Naive thymus-derived CD4-positive, alpha-beta T cell (primary cell): ENCODE measurements at regions of chr3 and their contacts with region 1.

Region 1: GRCh38 chr3:41207355-41207754 is 8.1 kb downstream of the CTNNB1 start:
- DNase-seq: no peak
- ATAC-seq: no peak
- H3K4me3 ChIP-seq: no peak overlapping the region
- H3K4me3 Mint-ChIP-seq: peak overlapping the region in 9 of 10 donors; percentile 38 to 90 (median 59)
- H3K27ac ChIP-seq: no peak overlapping the region
- H3K27ac Mint-ChIP-seq: peak overlapping the region in 6 of 9 donors; percentile 19 to 80 (median 45)
- H3K4me1 ChIP-seq: peaks cover 56 to 71% of the 10 kb centered on the region in 2 donors
- H3K4me1 Mint-ChIP-seq: peaks cover 44 to 91% (median 85%) of the 10 kb centered on the region in 7 donors
- H3K27me3 ChIP-seq: no peaks in the 10 kb centered on the region
- H3K27me3 Mint-ChIP-seq: no peaks in the 10 kb centered on the region

Region 2: GRCh38 chr3:41175365-41175764 is 32.0 kb before region 1 on chr3:
- CTCF ChIA-PET with region 1: no interaction called
- POLR2A ChIA-PET with region 1: no interaction called
- intact Hi-C with region 1: no loop called
- DNase-seq: no peak
- ATAC-seq: no peak
- H3K4me3 ChIP-seq: no peak overlapping the region
- H3K4me3 Mint-ChIP-seq: no peak overlapping the region
- H3K27ac ChIP-seq: no peak overlapping the region
- H3K27ac Mint-ChIP-seq: no peak overlapping the region
- H3K4me1 ChIP-seq: no peaks in the 10 kb centered on the region
- H3K4me1 Mint-ChIP-seq: peaks cover 0 to 2% (median 0%) of the 10 kb centered on the region in 7 donors
- H3K27me3 ChIP-seq: no peaks in the 10 kb centered on the region
- H3K27me3 Mint-ChIP-seq: peaks cover 5 to 21% (median 11%) of the 10 kb centered on the region in 5 donors

Region 3: DNA sequence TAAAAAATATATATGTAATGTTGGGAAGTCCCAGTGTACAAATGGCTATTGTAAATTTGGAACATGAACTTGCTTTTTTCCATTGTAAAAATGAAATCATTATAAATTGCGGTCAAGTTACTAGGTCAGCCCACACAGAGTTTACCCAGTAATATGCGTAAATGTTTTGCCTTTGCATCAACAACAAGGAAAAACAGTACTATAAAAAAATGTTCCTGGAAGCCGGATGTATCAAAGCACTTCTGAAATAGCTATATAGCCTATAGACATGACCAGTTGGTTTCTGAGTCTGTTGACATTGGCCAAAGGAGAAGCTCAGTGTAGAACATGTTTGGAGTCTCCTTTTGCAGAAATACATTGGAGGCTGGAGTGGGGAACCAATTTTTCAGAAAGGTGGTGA is 15.1 kb after region 1 on chr3:
- CTCF ChIA-PET with region 1: no interaction called
- POLR2A ChIA-PET with region 1: interaction called, 7 read pairs
- intact Hi-C with region 1: loop called in 1 of 2 experiments (anchors 1 kb)
- DNase-seq: no peak
- ATAC-seq: peak; percentile 4
- H3K4me3 ChIP-seq: no peak overlapping the region
- H3K4me3 Mint-ChIP-seq: peak overlapping the region in 2 of 10 donors; percentile 6 to 43
- H3K27ac ChIP-seq: no peak overlapping the region
- H3K27ac Mint-ChIP-seq: peak overlapping the region in 4 of 9 donors; percentile 22 to 74 (median 42)
- H3K4me1 ChIP-seq: peaks cover 6 to 27% of the 10 kb centered on the region in 2 donors
- H3K4me1 Mint-ChIP-seq: peaks cover 36 to 76% (median 64%) of the 10 kb centered on the region in 7 donors
- H3K27me3 ChIP-seq: no peaks in the 10 kb centered on the region
- H3K27me3 Mint-ChIP-seq: no peaks in the 10 kb centered on the region